HEK293 (cell line): ENCODE measurements at regions of chr20 and their contacts with region 1.

Region 1: GRCh38 chr20:59571551-59572314 is 32.6 kb upstream of the PHACTR3 start:
- H3K4me3 ChIP-seq: peak overlapping the region; percentile 11; the same call in 1 of the 2 replicates
- H3K27ac ChIP-seq: no peak overlapping the region
- H3K4me1 ChIP-seq: no peaks in the 10 kb centered on the region
- CTCF ChIP-seq: peak; percentile 53

Region 2: DNA sequence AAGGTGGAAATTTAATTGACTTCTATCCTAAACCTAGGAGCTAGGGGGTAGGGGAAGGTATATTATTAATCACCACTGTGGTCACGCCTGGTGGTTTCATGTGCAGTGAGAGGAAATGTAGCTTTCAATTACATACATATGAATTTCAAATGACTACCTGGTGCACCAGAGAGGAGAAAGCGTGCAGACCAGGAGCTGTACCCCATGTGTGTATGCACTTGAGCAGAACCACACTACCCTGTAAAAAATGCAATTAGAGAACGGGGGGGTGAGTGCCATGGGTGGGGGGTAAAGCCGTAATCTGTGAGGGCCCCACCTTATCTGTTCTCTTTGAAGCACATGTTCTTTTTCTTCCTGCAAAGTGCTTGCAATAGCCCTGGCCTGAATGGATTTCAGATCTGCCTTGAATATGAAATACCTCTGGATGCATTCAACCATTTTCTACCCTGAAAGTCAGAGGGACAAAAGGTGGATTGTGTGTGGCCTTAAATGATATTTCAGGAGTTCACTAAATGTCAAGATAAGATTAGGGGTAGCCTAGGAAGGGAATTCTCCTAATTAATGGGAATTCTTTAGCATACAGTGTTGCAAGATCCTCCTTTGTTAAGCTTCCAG is 302.2 kb before region 1 on chr20:
- CTCF ChIA-PET with region 1: no interaction called
- POLR2A ChIA-PET with region 1: no interaction called
- H3K4me3 ChIP-seq: no peak overlapping the region
- H3K27ac ChIP-seq: no peak overlapping the region
- H3K4me1 ChIP-seq: no peaks in the 10 kb centered on the region
- CTCF ChIP-seq: no peak

Region 3: GRCh38 chr20:59469267-59470252 is 102.2 kb before region 1 on chr20:
- CTCF ChIA-PET with region 1: no interaction called
- POLR2A ChIA-PET with region 1: no interaction called
- H3K4me3 ChIP-seq: no peak overlapping the region
- H3K27ac ChIP-seq: no peak overlapping the region
- H3K4me1 ChIP-seq: no peaks in the 10 kb centered on the region
- CTCF ChIP-seq: no peak

Region 4: DNA sequence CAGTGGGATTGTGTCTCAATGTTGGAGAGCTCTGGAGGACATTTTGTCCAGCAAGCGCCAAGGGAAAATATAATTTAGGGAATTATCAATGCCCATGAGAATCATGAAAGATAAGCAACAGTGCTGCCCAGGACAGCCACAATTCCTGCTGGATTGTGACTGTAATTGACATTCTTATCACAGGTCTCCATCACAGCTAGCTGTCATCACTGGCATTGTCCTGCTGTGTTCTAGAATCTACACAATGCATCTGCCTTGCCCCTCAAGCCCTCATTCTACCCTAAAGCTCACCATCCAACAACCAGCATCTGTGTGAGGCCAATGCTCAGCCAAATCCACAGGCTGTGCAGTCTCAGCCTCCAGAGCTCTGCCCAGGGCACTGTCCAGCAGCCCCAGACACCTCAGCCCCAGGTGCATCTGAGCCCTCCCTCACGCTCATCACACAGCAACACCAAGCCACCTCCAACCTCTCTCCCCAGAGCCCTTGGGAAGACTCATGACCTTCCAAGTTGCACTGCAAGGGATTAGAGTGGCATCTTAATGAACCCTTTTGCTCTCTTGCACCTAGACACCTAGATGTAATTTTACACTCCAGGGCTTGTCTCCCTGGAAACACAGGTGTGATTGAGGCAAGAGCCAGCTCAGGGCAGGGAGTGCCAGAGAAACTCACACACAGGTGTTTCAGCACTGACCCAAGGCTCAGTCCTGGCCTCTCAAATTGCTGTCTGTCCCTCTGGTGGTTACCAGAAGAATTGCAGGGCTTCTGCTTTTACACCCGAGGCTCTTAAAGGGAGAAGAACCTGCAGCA is 52.6 kb before region 1 on chr20:
- CTCF ChIA-PET with region 1: interaction called, 10 read pairs
- POLR2A ChIA-PET with region 1: no interaction called
- H3K4me3 ChIP-seq: no peak overlapping the region
- H3K27ac ChIP-seq: no peak overlapping the region
- H3K4me1 ChIP-seq: no peaks in the 10 kb centered on the region
- CTCF ChIP-seq: peak; percentile 21; the same call in 1 of the 2 replicates

Region 5: DNA sequence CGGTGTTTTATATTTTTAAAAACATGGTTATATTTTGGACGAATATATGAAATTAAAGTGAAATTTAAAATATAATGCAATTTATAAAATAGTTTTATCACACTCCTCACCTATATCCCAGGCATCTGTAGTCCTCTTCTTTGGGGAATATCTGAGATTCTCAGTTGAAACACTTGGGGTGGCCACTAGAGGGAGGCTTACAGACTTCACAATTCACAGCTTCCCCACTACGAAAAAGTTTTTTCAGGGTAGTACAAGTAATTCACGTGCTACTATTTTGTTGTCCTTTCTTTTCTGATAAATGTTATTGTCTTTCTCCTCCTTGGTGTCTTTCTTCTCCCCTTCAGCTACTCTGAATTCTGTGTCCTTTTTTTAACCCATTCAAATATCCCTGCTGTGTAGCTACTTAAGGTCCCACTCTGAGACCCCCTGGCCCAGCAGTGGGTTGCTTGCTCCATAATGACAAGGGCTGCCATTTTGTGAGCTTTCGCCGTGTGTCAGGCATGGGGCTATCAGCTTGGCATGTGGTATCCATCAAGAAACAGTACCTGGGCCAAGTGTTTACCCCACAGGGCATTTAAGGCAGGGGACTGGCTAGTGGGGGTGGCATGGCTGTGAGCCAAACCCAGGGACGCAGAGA is 11.0 kb before region 1 on chr20:
- CTCF ChIA-PET with region 1: interaction called, 48 read pairs
- POLR2A ChIA-PET with region 1: no interaction called
- H3K4me3 ChIP-seq: no peak overlapping the region
- H3K27ac ChIP-seq: no peak overlapping the region
- H3K4me1 ChIP-seq: no peaks in the 10 kb centered on the region
- CTCF ChIP-seq: peak; percentile 18; the same call in 1 of the 2 replicates

Region 6: GRCh38 chr20:59588236-59588855 is 16.6 kb after region 1 on chr20:
- CTCF ChIA-PET with region 1: interaction called, 14 read pairs
- POLR2A ChIA-PET with region 1: no interaction called
- H3K4me3 ChIP-seq: no peak overlapping the region
- H3K27ac ChIP-seq: no peak overlapping the region
- H3K4me1 ChIP-seq: no peaks in the 10 kb centered on the region
- CTCF ChIP-seq: no peak

Region 7: GRCh38 chr20:59598625-59599310 is 27.0 kb after region 1 on chr20:
- CTCF ChIA-PET with region 1: interaction called, 23 read pairs
- POLR2A ChIA-PET with region 1: no interaction called
- H3K4me3 ChIP-seq: no peak overlapping the region
- H3K27ac ChIP-seq: no peak overlapping the region
- H3K4me1 ChIP-seq: no peaks in the 10 kb centered on the region
- CTCF ChIP-seq: peak; percentile 63

Region 8: GRCh38 chr20:59670786-59671482 is 99.2 kb after region 1 on chr20:
- CTCF ChIA-PET with region 1: no interaction called
- POLR2A ChIA-PET with region 1: no interaction called
- H3K4me3 ChIP-seq: no peak overlapping the region
- H3K27ac ChIP-seq: no peak overlapping the region
- H3K4me1 ChIP-seq: no peaks in the 10 kb centered on the region
- CTCF ChIP-seq: no peak

Region 9: DNA sequence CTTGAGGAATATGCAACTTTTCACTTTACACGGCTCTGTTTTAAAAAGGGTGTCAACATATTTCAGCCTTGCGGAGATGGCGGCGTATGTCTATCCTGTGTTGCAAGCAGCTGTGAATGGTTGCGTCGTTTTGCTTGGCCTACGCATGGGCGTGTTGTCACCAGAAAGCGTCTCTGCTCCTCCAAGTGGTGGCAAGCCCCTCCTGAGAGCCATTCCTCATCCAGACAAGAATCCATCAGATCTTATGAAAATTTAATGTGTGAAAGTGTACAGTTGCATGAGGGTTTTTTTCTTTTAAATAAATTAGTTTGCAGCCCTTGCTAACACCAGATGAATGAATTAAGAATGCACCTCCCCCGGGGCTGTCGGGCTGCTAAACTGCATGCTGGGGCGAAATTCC is 147.0 kb after region 1 on chr20:
- CTCF ChIA-PET with region 1: interaction called, 13 read pairs
- POLR2A ChIA-PET with region 1: no interaction called
- H3K4me3 ChIP-seq: no peak overlapping the region
- H3K27ac ChIP-seq: no peak overlapping the region
- H3K4me1 ChIP-seq: no peaks in the 10 kb centered on the region
- CTCF ChIP-seq: no peak

Region 10: GRCh38 chr20:59751056-59751688 is 179.4 kb after region 1 on chr20:
- CTCF ChIA-PET with region 1: interaction called, 15 read pairs
- POLR2A ChIA-PET with region 1: no interaction called
- H3K4me3 ChIP-seq: no peak overlapping the region
- H3K27ac ChIP-seq: no peak overlapping the region
- H3K4me1 ChIP-seq: no peaks in the 10 kb centered on the region
- CTCF ChIP-seq: peak; percentile 78